ENCODE measurements at regions of chr3 and their contacts with region 1.

Region 1: GRCh38 chr3:99833617-99834205 is 16.0 kb downstream of the CMSS1 start:
- DNase-seq: no peak
- H3K4me3 ChIP-seq: no peak overlapping the region
- H3K27ac ChIP-seq: no peak overlapping the region
- H3K4me1 ChIP-seq: peaks cover 3% of the 10 kb centered on the region
- H3K27me3 ChIP-seq: no peaks in the 10 kb centered on the region
- CTCF ChIP-seq: no peak

Region 2: DNA sequence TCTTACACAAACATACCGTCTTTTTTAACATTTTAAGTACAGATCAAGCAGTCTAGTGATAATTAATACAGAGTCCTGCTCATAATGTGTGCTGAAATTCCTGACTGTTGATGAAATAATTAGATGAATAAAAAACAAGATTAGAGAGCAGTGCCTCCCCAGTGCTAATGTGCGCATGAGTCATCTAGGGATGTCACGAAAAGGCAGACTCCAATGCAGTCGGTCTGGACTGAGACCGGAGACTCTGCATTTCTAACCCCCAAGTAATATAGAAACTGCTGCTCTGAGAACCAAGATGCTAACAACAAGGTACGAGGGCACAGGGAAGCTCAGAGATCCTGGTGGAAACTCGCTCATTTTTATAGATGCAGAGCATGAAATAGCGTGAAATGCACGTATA is 133.9 kb before region 1 on chr3:
- CTCF ChIA-PET with region 1: no interaction called
- dilution Hi-C with region 1: no loop called
- in situ Hi-C with region 1: no loop called
- intact Hi-C with region 1: no loop called
- DNase-seq: no peak
- H3K4me3 ChIP-seq: no peak overlapping the region
- H3K27ac ChIP-seq: no peak overlapping the region
- H3K4me1 ChIP-seq: no peaks in the 10 kb centered on the region
- H3K27me3 ChIP-seq: no peaks in the 10 kb centered on the region
- CTCF ChIP-seq: no peak

Region 3: DNA sequence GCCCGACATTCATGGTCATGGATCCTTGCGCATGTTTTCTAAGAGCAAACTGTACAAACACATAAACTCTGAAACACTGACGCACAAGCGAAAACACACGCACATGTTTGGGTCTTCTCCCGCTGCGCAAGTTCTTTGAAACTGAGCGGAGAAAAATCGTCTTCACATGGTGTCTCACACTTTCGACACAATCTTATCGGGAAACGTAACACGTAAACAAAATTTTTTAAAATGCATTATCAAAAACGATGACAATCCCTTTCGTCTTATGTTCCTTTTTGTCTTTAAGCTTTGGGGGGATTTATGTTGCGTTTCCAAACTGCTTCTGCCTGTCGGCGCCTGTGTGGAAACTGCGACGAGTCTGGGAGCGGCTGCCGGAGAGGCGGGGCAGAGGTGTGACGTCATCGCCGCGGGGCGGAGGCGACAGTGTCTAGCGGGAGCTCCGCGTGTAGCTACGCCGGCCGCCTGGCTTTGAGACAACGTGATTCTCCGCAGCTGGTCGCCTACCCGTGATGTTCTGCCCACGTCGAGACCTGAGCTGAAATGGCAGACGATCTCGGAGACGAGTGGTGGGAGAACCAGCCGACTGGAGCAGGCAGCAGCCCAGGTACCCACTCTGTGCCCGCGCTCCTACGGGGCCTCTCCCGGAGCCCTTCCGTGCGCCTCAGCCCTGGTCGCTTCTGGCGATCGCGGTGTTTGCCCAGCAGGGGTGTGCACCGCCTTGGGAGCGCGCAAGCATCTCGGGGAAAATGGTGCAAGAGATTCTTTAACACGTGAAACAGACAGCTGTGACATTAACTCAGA is 16.1 kb before region 1 on chr3 and contains the start of gene CMSS1:
- CTCF ChIA-PET with region 1: interaction called, 15 read pairs
- dilution Hi-C with region 1: no loop called
- in situ Hi-C with region 1: no loop called
- intact Hi-C with region 1: no loop called
- DNase-seq: peak; percentile 90
- H3K4me3 ChIP-seq: peak within 1 kb of the TSS; percentile 63 to 79 (median 79)
- H3K27ac ChIP-seq: peak within 1 kb of the TSS; percentile 97
- H3K4me1 ChIP-seq: peaks cover 6% of the 10 kb centered on the region
- H3K27me3 ChIP-seq: no peaks in the 10 kb centered on the region
- CTCF ChIP-seq: peak in 1 of 2 donors; percentile 2
- total RNA-seq, gene CMSS1: 20.8 to 55.3 TPM

Region 4: DNA sequence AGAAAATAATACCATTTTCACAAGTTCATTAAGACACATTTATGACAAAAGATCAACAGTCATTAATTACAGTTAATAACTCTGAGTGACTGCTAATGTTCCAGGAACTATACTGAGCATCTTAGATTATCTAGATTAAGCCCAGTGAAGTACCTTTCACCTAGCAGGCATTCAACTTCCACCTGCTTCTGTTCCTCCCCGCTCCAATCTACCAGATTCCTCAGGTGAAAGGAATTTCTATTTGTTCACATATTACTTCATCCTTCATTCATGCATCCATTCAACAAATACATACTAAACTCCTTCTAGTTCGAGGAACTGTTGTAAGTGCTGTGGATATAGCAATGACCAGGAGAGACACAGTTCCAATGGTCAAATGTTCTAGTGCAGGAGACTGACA is 141.3 kb after region 1 on chr3:
- CTCF ChIA-PET with region 1: no interaction called
- dilution Hi-C with region 1: no loop called
- in situ Hi-C with region 1: no loop called
- intact Hi-C with region 1: no loop called
- DNase-seq: no peak
- H3K4me3 ChIP-seq: no peak overlapping the region
- H3K27ac ChIP-seq: no peak overlapping the region
- H3K4me1 ChIP-seq: no peaks in the 10 kb centered on the region
- H3K27me3 ChIP-seq: no peaks in the 10 kb centered on the region
- CTCF ChIP-seq: no peak

Region 5: DNA sequence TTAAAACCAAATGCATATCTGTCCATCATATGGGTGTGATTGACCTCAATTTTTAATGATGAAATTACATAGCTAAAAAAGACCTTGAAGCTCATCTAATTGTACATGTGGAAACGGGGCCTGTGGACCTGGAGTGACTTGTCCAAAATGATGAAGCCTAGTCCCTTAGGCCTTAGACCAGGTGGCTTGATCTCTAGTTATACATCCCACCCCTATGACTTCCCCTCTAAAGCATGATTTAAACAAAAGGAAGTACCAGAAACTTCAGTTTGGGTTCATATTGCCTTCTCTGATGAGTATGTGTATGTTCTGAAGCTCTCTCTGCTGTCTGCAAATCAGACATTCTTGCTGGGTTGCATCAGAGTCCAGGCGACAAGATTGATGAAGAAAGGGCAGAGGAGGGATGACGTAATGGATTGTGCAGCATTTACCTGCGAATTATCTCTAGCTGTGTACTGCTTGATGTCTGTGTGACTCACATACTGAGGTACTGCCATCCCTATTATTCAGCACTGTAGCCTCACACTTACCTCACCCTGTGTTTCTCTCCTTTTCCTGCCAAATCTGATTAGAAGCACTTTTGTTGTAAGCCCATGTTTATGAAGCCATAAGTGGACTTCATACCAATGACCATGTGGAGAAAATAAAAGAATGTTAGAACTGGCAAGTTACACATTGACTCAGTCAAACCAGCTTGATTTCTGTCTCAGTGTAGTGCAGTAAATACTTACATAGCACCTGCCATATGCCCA is 169.1 kb after region 1 on chr3:
- CTCF ChIA-PET with region 1: interaction called, 11 read pairs
- dilution Hi-C with region 1: no loop called
- in situ Hi-C with region 1: no loop called
- intact Hi-C with region 1: no loop called
- DNase-seq: peak; percentile 99
- H3K4me3 ChIP-seq: no peak overlapping the region
- H3K27ac ChIP-seq: peak overlapping the region; percentile 83
- H3K4me1 ChIP-seq: peaks cover 38% of the 10 kb centered on the region
- H3K27me3 ChIP-seq: no peaks in the 10 kb centered on the region
- CTCF ChIP-seq: no peak

Region 6: DNA sequence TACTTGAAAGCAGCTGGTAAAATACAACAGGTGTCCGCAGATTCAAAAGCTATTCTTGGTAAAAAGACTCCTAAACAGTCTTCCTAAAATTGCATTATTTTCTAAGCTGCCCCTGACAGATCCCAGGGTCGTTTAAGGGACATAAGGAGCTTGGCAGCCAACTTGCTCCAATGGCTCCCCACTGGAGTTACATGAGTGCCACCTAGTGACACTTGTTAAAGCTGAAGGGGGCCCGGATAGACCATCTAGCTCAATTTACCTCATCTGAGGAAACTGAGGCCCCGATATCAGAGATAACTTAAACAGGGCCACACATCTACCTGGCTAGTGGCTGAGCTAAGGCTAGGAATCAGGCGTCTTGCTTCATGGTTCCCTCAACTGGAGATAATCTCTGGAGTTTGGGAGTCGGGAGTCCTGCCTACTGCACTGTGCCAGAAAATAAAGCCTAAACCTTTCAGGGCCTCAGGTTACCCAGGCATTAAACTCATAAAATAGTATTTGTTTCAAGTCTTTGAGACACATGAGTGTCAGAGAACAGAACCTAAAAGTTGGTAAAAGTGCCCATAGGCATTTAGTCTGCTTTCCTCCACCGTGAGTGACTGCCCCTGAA is 420.6 kb after region 1 on chr3:
- CTCF ChIA-PET with region 1: interaction called, 9 read pairs
- dilution Hi-C with region 1: no loop called
- in situ Hi-C with region 1: loop called in 1 of 2 experiments (anchors 5 kb)
- intact Hi-C with region 1: loop called (anchors 1 kb)
- DNase-seq: peak; percentile 26
- H3K4me3 ChIP-seq: no peak overlapping the region
- H3K27ac ChIP-seq: no peak overlapping the region
- H3K4me1 ChIP-seq: no peaks in the 10 kb centered on the region
- H3K27me3 ChIP-seq: no peaks in the 10 kb centered on the region
- CTCF ChIP-seq: peak; percentile 55 to 77

Region 7: DNA sequence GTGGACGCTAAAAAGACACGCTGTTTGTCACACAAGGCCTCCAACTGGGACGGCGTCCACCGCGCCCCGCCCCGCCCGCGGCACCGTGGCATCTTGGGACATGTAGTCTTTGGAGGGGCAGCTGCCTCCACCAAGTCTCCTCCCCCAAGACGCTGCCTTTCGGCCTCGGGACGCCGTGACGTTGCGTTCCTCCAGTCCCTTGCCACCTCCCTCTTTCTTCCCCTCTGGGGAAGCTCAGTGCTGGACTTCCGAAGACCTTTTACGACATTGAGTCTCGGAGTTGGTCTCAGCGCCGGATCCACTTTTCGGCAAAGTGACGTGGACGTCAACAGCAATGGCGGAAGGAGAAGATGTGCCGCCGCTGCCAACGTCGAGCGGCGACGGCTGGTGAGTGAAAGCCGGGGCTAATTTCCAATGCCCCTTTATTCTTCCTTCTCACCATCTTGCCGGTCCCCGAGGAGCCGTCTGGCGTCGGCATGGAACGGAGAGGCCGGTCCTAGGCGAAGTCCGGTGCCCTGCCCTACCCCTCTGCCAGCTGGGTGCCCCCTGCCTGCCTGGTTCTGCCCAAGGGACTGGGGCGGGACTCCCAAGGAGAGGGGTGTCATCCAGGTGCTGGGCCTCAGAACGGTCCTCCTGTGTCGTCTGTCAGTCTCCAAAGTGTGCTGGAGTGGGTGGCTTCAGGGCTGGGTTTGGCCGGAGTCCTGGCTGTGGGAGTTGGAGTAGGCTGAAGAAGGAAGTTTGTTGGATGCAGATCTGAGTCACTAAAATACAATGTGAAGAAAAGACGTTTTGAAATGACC is 427.2 kb after region 1 on chr3 and contains the start of gene TBC1D23:
- CTCF ChIA-PET with region 1: interaction called, 5 read pairs
- dilution Hi-C with region 1: no loop called
- in situ Hi-C with region 1: loop called in 1 of 2 experiments (anchors 10 kb)
- intact Hi-C with region 1: no loop called
- DNase-seq: peak; percentile 100
- H3K4me3 ChIP-seq: peak within 1 kb of the TSS; percentile 78 to 93 (median 89)
- H3K27ac ChIP-seq: peak within 1 kb of the TSS; percentile 90
- H3K4me1 ChIP-seq: peaks cover 22% of the 10 kb centered on the region
- H3K27me3 ChIP-seq: no peaks in the 10 kb centered on the region
- CTCF ChIP-seq: peak in 1 of 2 donors; percentile 19
- total RNA-seq, gene TBC1D23: 54.3 to 57.1 TPM

Region 8: DNA sequence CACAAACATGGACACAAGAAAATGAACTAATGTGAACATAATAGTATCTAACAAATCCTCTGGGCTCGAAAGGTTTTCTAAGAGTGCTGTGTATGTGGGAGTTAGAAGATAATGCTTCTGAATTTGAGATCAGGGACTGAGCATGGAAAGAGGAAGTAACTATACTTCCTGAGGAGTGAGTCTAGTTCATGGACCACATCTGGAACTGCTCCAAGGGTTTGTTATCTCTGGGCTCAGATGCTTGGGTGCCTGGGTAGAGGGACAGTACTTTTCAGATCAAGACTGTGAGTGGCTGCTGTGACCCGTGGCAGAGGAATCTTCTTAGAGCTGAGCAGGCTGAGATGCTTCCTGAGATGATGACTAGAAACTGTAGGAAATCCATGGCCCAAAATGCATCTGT is 455.6 kb after region 1 on chr3:
- CTCF ChIA-PET with region 1: interaction called, 10 read pairs
- dilution Hi-C with region 1: no loop called
- in situ Hi-C with region 1: no loop called
- intact Hi-C with region 1: no loop called
- DNase-seq: no peak
- H3K4me3 ChIP-seq: no peak overlapping the region
- H3K27ac ChIP-seq: no peak overlapping the region
- H3K4me1 ChIP-seq: no peaks in the 10 kb centered on the region
- H3K27me3 ChIP-seq: no peaks in the 10 kb centered on the region
- CTCF ChIP-seq: no peak

Region 9: GRCh38 chr3:100370756-100371155 is 537.0 kb after region 1 on chr3:
- CTCF ChIA-PET with region 1: interaction called, 10 read pairs
- dilution Hi-C with region 1: no loop called
- in situ Hi-C with region 1: no loop called
- intact Hi-C with region 1: no loop called
- DNase-seq: no peak
- H3K4me3 ChIP-seq: no peak overlapping the region
- H3K27ac ChIP-seq: no peak overlapping the region
- H3K4me1 ChIP-seq: no peaks in the 10 kb centered on the region
- H3K27me3 ChIP-seq: no peaks in the 10 kb centered on the region
- CTCF ChIP-seq: no peak

Measured in mammary epithelial cell (primary cell).